CD8-positive, alpha-beta memory T cell (primary cell): ENCODE measurements at regions of chr5 and their contacts with region 1.

Region 1: GRCh38 chr5:126339215-126339805 is 83.9 kb upstream of the GRAMD2B start:
- DNase-seq: peak; percentile 6 to 57 (median 45)
- H3K4me3 ChIP-seq: no peak overlapping the region
- H3K4me3 Mint-ChIP-seq: no peak overlapping the region
- H3K27ac ChIP-seq: no peak overlapping the region
- H3K27ac Mint-ChIP-seq: no peak overlapping the region
- H3K4me1 ChIP-seq: no peaks in the 10 kb centered on the region
- H3K4me1 Mint-ChIP-seq: no peaks in the 10 kb centered on the region
- H3K27me3 ChIP-seq: no peaks in the 10 kb centered on the region
- H3K27me3 Mint-ChIP-seq: peaks cover 8 to 35% of the 10 kb centered on the region in 2 donors

Region 2: DNA sequence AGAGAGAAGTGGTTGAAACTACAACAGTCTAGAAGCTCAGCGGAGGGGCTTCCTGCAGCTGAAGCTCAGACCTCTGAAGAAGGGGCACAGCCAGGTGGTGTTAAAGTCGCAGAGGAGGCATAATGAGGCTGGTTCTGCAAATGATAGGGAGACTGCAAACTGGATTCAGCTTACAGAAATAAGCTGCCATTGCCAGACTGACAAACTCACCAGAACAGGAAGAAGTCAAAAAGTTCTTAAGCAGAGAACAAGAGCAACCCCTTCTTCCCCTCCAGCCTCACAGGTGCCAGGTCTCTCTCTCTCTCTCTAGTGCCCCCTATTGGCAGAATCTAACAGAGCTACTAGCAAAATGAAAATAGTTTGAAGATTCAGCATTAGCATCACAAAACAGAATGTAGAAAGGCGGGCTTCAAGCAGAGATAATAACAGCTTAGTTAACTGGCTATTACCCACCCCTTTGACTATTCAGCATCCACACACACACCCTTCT is 160.6 kb after region 1 on chr5:
- CTCF ChIA-PET with region 1: interaction called, 10 read pairs
- POLR2A ChIA-PET with region 1: no interaction called
- DNase-seq: peak in 4 of 5 donors; percentile 5 to 67 (median 51)
- H3K4me3 ChIP-seq: no peak overlapping the region
- H3K4me3 Mint-ChIP-seq: no peak overlapping the region
- H3K27ac ChIP-seq: no peak overlapping the region
- H3K27ac Mint-ChIP-seq: peak overlapping the region in 6 of 8 donors; percentile 8 to 80 (median 59)
- H3K4me1 ChIP-seq: peaks cover 11% of the 10 kb centered on the region
- H3K4me1 Mint-ChIP-seq: peaks cover 6 to 22% (median 13%) of the 10 kb centered on the region in 3 donors
- H3K27me3 ChIP-seq: no peaks in the 10 kb centered on the region
- H3K27me3 Mint-ChIP-seq: no peaks in the 10 kb centered on the region

Region 3: DNA sequence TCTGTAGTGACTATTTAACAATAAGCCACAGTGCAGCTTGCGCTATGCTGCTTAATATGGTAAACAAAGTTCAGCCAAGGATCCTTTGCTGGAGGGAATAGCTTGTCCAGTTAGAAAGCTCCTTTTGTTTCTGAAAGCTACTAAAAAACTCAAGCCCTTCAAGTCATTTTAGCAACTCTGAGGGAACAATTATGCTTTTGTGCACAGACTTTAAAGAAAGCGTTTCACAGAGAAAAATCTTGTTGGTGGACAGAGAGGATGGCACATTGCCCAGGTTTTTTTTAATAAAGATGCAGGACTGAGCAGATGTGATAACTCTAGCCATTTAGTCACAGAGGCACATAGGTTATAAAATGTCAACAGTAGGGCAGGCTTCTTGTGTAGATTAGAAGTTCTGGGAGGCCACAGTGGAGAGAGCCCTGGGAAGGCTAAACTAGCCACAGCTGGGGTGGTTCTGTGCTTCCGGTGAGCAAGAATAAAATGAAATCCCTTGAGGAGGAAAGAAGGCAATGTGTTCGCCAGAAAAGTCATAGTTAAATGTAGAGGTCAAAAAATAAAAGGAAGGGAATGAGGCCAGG is 192.3 kb after region 1 on chr5:
- CTCF ChIA-PET with region 1: interaction called, 22 read pairs
- POLR2A ChIA-PET with region 1: no interaction called
- DNase-seq: no peak
- H3K4me3 ChIP-seq: no peak overlapping the region
- H3K4me3 Mint-ChIP-seq: no peak overlapping the region
- H3K27ac ChIP-seq: no peak overlapping the region
- H3K27ac Mint-ChIP-seq: peak overlapping the region in 1 of 8 donors; percentile 31
- H3K4me1 ChIP-seq: no peaks in the 10 kb centered on the region
- H3K4me1 Mint-ChIP-seq: no peaks in the 10 kb centered on the region
- H3K27me3 ChIP-seq: no peaks in the 10 kb centered on the region
- H3K27me3 Mint-ChIP-seq: peaks cover 7 to 8% of the 10 kb centered on the region in 2 donors

Region 4: DNA sequence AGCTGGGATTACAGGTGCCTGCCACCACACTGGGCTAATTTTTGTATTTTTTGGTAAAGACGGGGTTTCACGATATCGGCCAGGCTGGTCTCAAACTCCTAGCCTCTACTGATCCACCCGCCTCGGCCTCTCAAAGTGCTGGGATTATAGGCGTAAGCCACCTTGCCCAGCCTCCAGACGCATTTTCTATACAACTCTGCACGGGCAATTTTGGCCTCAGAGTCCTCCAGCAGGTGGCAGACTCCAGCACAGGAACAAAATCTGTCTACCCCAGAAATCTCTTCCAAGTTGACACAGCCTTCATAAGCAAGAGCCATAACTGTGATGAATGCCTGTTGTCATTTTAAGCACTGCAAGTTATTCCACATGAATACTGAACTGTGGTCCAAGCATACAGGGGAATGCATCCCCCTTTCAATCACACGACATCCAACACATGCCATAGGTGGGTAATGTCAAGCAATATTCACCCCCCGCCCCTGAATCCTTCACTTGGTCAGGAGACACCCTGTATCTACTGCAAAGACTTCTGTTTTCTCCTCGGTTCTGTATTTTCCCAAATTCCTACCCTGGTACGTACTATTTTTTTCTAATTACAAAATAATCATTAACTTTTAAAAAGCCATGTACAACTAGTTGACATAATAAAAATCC is 204.9 kb after region 1 on chr5:
- CTCF ChIA-PET with region 1: interaction called, 63 read pairs
- POLR2A ChIA-PET with region 1: no interaction called
- DNase-seq: peak in 1 of 5 donors; percentile 7
- H3K4me3 ChIP-seq: no peak overlapping the region
- H3K4me3 Mint-ChIP-seq: no peak overlapping the region
- H3K27ac ChIP-seq: no peak overlapping the region
- H3K27ac Mint-ChIP-seq: no peak overlapping the region
- H3K4me1 ChIP-seq: no peaks in the 10 kb centered on the region
- H3K4me1 Mint-ChIP-seq: no peaks in the 10 kb centered on the region
- H3K27me3 ChIP-seq: no peaks in the 10 kb centered on the region
- H3K27me3 Mint-ChIP-seq: peaks cover 0 to 9% of the 10 kb centered on the region in 2 donors

Region 5: GRCh38 chr5:126600631-126601511 is 261.6 kb after region 1 on chr5 and contains the start of gene PHAX:
- CTCF ChIA-PET with region 1: interaction called, 18 read pairs
- POLR2A ChIA-PET with region 1: no interaction called
- DNase-seq: peak; percentile 57 to 74 (median 69)
- H3K4me3 ChIP-seq: peak within 1 kb of the TSS; percentile 74
- H3K4me3 Mint-ChIP-seq: peak within 1 kb of the TSS; percentile 89 to 100 (median 97)
- H3K27ac ChIP-seq: peak within 1 kb of the TSS; percentile 86
- H3K27ac Mint-ChIP-seq: peak within 1 kb of the TSS; percentile 71 to 100 (median 97)
- H3K4me1 ChIP-seq: peaks cover 22% of the 10 kb centered on the region
- H3K4me1 Mint-ChIP-seq: peaks cover 28 to 44% (median 40%) of the 10 kb centered on the region in 3 donors
- H3K27me3 ChIP-seq: no peaks in the 10 kb centered on the region
- H3K27me3 Mint-ChIP-seq: peaks cover 0 to 4% of the 10 kb centered on the region in 2 donors
- total RNA-seq, gene PHAX: 59.2 to 68.2 TPM